Activated CD8-positive, alpha-beta T cell treated with anti-CD3 and anti-CD28 coated beads, Interleukin-2, amount 10 ng/mL, durations not matched to agents 7 days and 5 days (primary cell): ENCODE measurements at regions of chr1 and their contacts with region 1.

Region 1: GRCh38 chr1:32215629-32216480 is 6.3 kb downstream of the TMEM234 start:
- DNase-seq: peak; percentile 74
- ATAC-seq: peak; percentile 90
- H3K4me3 Mint-ChIP-seq: no peak overlapping the region
- H3K27ac Mint-ChIP-seq: peak overlapping the region; percentile 43
- H3K4me1 Mint-ChIP-seq: peaks cover 15% of the 10 kb centered on the region
- H3K27me3 Mint-ChIP-seq: no peaks in the 10 kb centered on the region

Region 2: GRCh38 chr1:32200226-32201010 is 15.4 kb before region 1 on chr1 and contains the start of gene CCDC28B:
- CTCF ChIA-PET with region 1: interaction called, 52 read pairs
- POLR2A ChIA-PET with region 1: interaction called, 22 read pairs
- DNase-seq: peak; percentile 72
- ATAC-seq: peak; percentile 55
- H3K4me3 Mint-ChIP-seq: peak within 1 kb of the TSS; percentile 92
- H3K27ac Mint-ChIP-seq: peak within 1 kb of the TSS; percentile 76
- H3K4me1 Mint-ChIP-seq: peaks cover 78% of the 10 kb centered on the region
- H3K27me3 Mint-ChIP-seq: no peaks in the 10 kb centered on the region
- total RNA-seq, gene CCDC28B: 71.4 to 72.8 TPM

Region 3: DNA sequence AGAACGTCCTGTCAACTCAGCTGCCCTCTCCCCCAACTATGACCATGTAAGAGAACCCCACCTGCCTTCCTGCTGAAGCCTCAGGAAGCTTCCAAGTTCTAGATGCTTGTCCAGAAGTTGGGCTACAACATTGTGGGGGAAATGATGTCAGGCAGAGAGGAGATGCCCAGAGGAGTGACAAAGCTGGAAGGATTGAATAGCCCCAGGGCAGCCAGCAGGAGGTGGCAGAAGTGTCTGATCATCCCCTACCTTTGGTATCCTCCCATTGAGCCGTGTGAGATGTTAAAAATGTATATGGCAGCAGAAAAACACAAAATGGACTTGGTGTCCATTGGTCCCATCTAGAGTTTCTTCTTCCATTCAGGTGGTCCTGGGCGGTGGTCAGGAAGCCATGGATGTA is 12.9 kb after region 1 on chr1:
- CTCF ChIA-PET with region 1: interaction called, 11 read pairs
- POLR2A ChIA-PET with region 1: no interaction called
- DNase-seq: no peak
- ATAC-seq: no peak
- H3K4me3 Mint-ChIP-seq: no peak overlapping the region
- H3K27ac Mint-ChIP-seq: no peak overlapping the region
- H3K4me1 Mint-ChIP-seq: peaks cover 7% of the 10 kb centered on the region
- H3K27me3 Mint-ChIP-seq: no peaks in the 10 kb centered on the region

Region 4: GRCh38 chr1:32247983-32248889 is 32.4 kb after region 1 on chr1:
- CTCF ChIA-PET with region 1: interaction called, 58 read pairs
- POLR2A ChIA-PET with region 1: interaction called, 8 read pairs
- DNase-seq: peak; percentile 86
- ATAC-seq: peak; percentile 25
- H3K4me3 Mint-ChIP-seq: peak overlapping the region; percentile 99
- H3K27ac Mint-ChIP-seq: peak overlapping the region; percentile 95
- H3K4me1 Mint-ChIP-seq: peaks cover 50% of the 10 kb centered on the region
- H3K27me3 Mint-ChIP-seq: no peaks in the 10 kb centered on the region

Region 5: DNA sequence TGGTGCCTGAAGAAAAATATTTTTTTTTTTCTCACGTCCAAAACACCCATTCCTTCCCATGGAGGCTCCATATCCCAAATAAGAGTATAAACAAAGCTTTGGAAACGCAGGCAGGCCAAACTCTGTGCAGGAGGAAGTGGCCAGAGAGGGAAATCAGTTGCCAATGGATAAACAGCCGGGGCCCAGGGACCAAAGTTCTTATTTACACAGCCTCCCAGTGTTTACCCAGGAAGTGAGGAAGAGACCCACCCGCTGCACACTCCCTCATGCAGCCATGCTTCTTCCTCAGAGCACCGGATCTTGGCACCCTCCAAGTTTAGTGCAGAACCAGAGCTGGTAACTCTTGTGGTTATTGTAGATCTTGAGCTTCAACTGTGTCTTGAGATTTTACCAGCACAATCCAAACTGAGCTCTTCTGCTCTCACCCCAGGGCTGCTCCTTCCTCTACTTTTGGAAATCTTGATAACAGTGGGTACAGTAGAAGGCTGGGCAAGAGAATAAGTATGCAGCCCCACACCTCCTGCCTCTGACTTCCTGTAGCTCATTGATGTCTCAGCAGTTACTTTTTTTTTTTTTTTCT is 105.9 kb after region 1 on chr1:
- CTCF ChIA-PET with region 1: interaction called, 22 read pairs
- POLR2A ChIA-PET with region 1: no interaction called
- DNase-seq: peak; percentile 51
- ATAC-seq: peak; percentile 83
- H3K4me3 Mint-ChIP-seq: peak overlapping the region; percentile 40
- H3K27ac Mint-ChIP-seq: peak overlapping the region; percentile 84
- H3K4me1 Mint-ChIP-seq: peaks cover 43% of the 10 kb centered on the region
- H3K27me3 Mint-ChIP-seq: no peaks in the 10 kb centered on the region

Region 6: GRCh38 chr1:32394141-32394889 is 178.5 kb after region 1 on chr1 and contains the start of gene BSDC1:
- CTCF ChIA-PET with region 1: interaction called, 13 read pairs
- POLR2A ChIA-PET with region 1: no interaction called
- DNase-seq: peak; percentile 99
- ATAC-seq: peak; percentile 99
- H3K4me3 Mint-ChIP-seq: peak within 1 kb of the TSS; percentile 91
- H3K27ac Mint-ChIP-seq: peak within 1 kb of the TSS; percentile 93
- H3K4me1 Mint-ChIP-seq: peaks cover 25% of the 10 kb centered on the region
- H3K27me3 Mint-ChIP-seq: peaks cover 4% of the 10 kb centered on the region
- total RNA-seq, gene BSDC1: 37.3 to 38.5 TPM